Activated naive CD4-positive, alpha-beta T cell treated with anti-CD3 and anti-CD28 coated beads for 36 hours (primary cell): ENCODE measurements at regions of chr2 and their contacts with region 1.

Region 1: DNA sequence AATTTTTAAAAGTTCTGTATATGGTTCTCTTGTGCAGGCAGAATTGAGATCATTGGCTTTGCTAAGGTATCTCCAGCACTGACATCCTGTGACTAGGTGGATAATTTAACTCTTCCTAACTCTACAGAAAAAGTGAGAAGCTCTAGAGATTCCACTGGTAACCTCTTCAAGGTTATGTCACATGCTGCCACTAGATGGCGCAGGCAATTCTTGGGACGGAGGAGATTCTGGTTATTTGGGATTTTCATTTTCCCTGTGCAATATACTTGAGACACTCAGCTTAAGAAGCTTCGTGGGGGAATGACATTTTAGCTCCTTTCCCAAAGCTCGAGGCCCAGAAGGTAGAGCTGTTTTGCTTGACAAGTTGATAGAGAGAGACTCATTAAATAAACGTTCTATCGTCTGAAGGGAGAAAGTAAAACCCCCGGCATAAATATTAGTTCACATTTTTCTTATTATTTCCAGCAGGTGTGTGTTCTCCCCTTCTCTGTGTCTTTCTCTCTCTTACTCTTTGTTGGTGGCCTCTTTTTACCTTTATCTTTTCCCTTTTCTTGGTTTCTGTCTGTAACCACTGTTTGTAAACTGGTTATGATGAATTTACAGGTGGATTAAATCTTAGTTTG is 26.6 kb upstream of the LANCL1 start:
- DNase-seq: peak; percentile 52
- H3K4me3 Mint-ChIP-seq: peak overlapping the region; percentile 49
- H3K27ac Mint-ChIP-seq: no peak overlapping the region
- H3K4me1 Mint-ChIP-seq: peaks cover 7% of the 10 kb centered on the region
- H3K27me3 Mint-ChIP-seq: peaks cover 25% of the 10 kb centered on the region

Region 2: DNA sequence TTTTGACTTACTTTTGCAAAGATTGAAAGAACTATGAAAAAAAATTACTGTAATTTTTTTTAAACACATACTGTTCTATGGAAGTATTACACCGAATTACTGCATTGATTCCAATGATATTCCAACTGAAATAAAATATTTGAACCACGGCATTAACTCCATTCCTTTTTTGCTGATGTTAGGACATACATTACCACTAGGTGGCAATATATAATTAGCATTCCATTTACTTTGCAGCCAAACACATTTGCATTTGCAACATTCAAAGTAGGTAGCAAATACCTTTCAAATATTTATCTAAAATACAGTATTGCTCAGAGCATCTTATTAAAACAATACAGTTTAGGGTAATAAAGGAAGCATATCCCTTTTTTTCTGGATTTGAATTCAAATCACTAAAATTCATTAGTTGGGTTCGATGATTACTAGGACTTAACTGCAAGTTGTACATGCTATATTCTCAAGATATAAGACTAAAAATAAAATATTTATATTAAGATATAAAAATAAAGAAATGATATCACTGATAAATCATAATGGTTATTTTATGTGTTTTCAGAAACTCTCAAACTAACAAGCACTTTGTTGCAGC is 57.9 kb before region 1 on chr2:
- CTCF ChIA-PET with region 1: interaction called, 7 read pairs
- intact Hi-C with region 1: loop called (anchors 2 kb)
- DNase-seq: no peak
- H3K4me3 Mint-ChIP-seq: no peak overlapping the region
- H3K27ac Mint-ChIP-seq: no peak overlapping the region
- H3K4me1 Mint-ChIP-seq: peaks cover 4% of the 10 kb centered on the region
- H3K27me3 Mint-ChIP-seq: no peaks in the 10 kb centered on the region

Region 3: GRCh38 chr2:210515911-210516310 is 12.8 kb after region 1 on chr2:
- CTCF ChIA-PET with region 1: interaction called, 13 read pairs
- intact Hi-C with region 1: no loop called
- DNase-seq: no peak
- H3K4me3 Mint-ChIP-seq: no peak overlapping the region
- H3K27ac Mint-ChIP-seq: no peak overlapping the region
- H3K4me1 Mint-ChIP-seq: no peaks in the 10 kb centered on the region
- H3K27me3 Mint-ChIP-seq: peaks cover 12% of the 10 kb centered on the region

Region 4: GRCh38 chr2:211085056-211085680 is 582.1 kb after region 1 on chr2:
- CTCF ChIA-PET with region 1: no interaction called
- intact Hi-C with region 1: no loop called
- DNase-seq: no peak
- H3K4me3 Mint-ChIP-seq: no peak overlapping the region
- H3K27ac Mint-ChIP-seq: no peak overlapping the region
- H3K4me1 Mint-ChIP-seq: no peaks in the 10 kb centered on the region
- H3K27me3 Mint-ChIP-seq: no peaks in the 10 kb centered on the region